GM12878 (cell line): ENCODE measurements at regions of chr7 and their contacts with region 1.

Region 1: GRCh38 chr7:140260352-140261104 is 83.7 kb upstream of the KDM7A start:
- DNase-seq: no peak
- ATAC-seq: no peak
- H3K4me3 ChIP-seq: no peak overlapping the region
- H3K27ac ChIP-seq: no peak overlapping the region
- H3K4me1 ChIP-seq: no peaks in the 10 kb centered on the region
- H3K27me3 ChIP-seq: no peaks in the 10 kb centered on the region
- CTCF ChIP-seq: no peak
- EP300 ChIP-seq: no peak
- POLR2A ChIP-seq: no peak
- RAD21 ChIP-seq: no peak

Region 2: GRCh38 chr7:140564643-140565042 is 304.1 kb after region 1 on chr7:
- CTCF ChIA-PET with region 1: no interaction called
- POLR2A ChIA-PET with region 1: interaction called, 10 read pairs
- RAD21 ChIA-PET with region 1: no interaction called
- SMC1A ChIA-PET with region 1: no interaction called
- in situ Hi-C with region 1: no loop called
- intact Hi-C with region 1: no loop called
- DNase-seq: no peak
- ATAC-seq: peak; percentile 70
- H3K4me3 ChIP-seq: no peak overlapping the region
- H3K27ac ChIP-seq: no peak overlapping the region
- H3K4me1 ChIP-seq: no peaks in the 10 kb centered on the region
- H3K27me3 ChIP-seq: no peaks in the 10 kb centered on the region
- CTCF ChIP-seq: no peak
- EP300 ChIP-seq: no peak
- POLR2A ChIP-seq: no peak
- RAD21 ChIP-seq: no peak